ENCODE measurements at regions of chr5 and their contacts with region 1.

Region 1: GRCh38 chr5:159106569-159107282 is 7.0 kb upstream of the EBF1 start:
- DNase-seq: peak; percentile 88
- H3K4me3 ChIP-seq: peak overlapping the region; percentile 2 to 22
- H3K27ac ChIP-seq: no peak overlapping the region
- H3K4me1 ChIP-seq: no peaks in the 10 kb centered on the region
- H3K27me3 ChIP-seq: no peaks in the 10 kb centered on the region
- CTCF ChIP-seq: peak; percentile 80 to 85 (median 81)
- POLR2A ChIP-seq: no peak

Region 2: GRCh38 chr5:158074992-158075769 is 1031.5 kb before region 1 on chr5:
- intact Hi-C with region 1: loop called (anchors 10 kb)
- DNase-seq: peak; percentile 77
- H3K4me3 ChIP-seq: peak overlapping the region; percentile 8 to 12
- H3K27ac ChIP-seq: peak overlapping the region in 1 of 2 donors; percentile 14
- H3K4me1 ChIP-seq: peaks cover 11% of the 10 kb centered on the region
- H3K27me3 ChIP-seq: no peaks in the 10 kb centered on the region
- CTCF ChIP-seq: peak; percentile 40 to 72 (median 66)
- POLR2A ChIP-seq: no peak

Region 3: GRCh38 chr5:158174918-158175851 is 931.5 kb before region 1 on chr5:
- intact Hi-C with region 1: loop called (anchors 5 kb)
- DNase-seq: peak; percentile 89
- H3K4me3 ChIP-seq: no peak overlapping the region
- H3K27ac ChIP-seq: peak overlapping the region in 1 of 2 donors; percentile 0
- H3K4me1 ChIP-seq: peaks cover 18% of the 10 kb centered on the region
- H3K27me3 ChIP-seq: no peaks in the 10 kb centered on the region
- CTCF ChIP-seq: peak; percentile 58 to 85 (median 79)
- POLR2A ChIP-seq: no peak

Measured in testis (tissue), 5 donors.